ENCODE measurements at regions of chr21 and their contacts with region 1.

Region 1: DNA sequence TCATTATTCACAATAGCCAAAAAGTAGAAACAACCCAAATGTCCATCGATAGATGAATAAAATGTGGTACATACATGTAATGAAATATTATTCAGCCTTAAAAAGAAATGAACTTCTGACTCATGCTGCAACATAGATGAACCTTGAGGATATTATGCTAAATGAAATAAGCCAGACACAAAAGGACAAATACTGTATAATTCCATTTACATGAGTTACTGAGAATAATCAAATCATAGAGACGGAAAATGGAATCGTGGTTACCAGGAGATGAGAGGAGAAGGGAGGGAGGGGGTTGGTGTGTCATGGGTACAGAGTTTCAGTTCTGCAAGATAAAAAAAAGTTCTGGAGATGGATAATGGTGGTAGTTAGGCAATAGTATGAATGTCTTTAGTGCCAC is 184.1 kb downstream of the PSMG1 start:
- DNase-seq: no peak
- ATAC-seq: no peak

Region 2: DNA sequence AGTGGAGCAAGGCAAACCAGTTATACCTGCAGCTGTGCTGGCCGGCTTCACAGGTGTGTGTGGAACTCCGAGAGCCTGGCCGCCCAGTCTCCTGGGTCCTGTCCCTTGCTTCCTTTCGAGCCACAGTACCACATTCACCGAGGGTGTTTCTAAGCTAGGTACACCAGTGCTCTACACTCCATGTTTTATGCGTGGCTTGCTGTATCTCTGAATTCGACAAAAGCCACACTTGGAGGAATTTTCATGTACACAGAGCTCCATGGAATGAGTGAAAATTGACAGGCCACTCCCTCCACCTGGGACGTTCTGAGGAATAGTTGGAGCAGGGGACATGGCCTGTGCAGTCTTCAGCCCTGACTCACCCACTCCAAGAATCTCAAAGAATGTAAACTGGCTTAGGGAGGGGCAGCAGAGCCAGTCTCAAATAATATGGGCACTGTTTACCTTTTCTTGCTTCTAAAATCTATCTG is 179.4 kb before region 1 on chr21:
- intact Hi-C with region 1: loop called in 1 of 2 experiments (anchors 5 kb)
- DNase-seq: no peak
- ATAC-seq: no peak

Region 3: GRCh38 chr21:38950435-38951094 is 48.6 kb before region 1 on chr21:
- intact Hi-C with region 1: no loop called
- DNase-seq: no peak
- ATAC-seq: no peak

Region 4: DNA sequence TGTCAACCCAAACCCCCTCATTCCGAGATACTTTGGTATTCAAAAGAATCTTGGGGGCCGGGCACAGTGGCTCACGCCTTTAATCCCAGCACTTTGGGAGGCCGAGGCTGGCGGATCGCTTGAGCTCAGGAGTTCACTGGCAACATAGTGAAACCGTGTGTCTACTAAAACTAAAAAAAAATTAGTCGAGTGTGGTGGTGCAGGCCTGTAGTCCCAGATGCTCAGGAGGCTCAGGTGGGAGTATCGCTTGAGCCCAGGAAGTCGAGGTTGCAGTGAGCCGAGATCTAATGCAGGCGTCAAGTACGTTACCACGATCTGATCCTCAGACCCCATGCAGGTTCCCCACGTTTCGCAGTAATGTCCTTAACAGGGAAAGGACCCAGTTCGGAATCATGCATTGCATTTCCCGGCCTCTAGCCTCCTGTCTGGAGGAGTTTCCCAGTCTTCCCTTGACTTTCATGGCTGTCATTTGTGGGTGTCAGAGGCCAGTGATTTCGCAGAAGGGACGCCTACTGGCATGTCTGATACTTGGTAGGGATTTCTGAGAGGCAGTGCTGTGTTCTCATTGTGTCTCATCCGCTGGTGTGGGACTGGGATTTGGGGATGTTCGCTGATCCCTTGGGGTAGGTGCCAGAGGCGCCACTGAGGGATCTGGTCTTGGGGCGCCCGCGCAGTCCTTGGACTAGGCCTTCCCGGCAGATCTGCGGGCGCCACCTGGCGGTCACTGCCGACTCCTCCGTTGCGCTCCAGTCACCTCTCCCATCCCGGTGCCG is 389.1 kb after region 1 on chr21:
- intact Hi-C with region 1: no loop called
- DNase-seq: peak; percentile 94
- ATAC-seq: peak; percentile 82 to 87